Caco-2 (cell line): ENCODE measurements at regions of chr4 and their contacts with region 1.

Region 1: GRCh38 chr4:108620101-108620932 is at the start of gene RPL34:
- DNase-seq: peak; percentile 92 to 95
- H3K4me3 ChIP-seq: peak within 1 kb of the TSS; percentile 82
- H3K4me3 Mint-ChIP-seq: peak within 1 kb of the TSS; percentile 96
- H3K27ac Mint-ChIP-seq: peak within 1 kb of the TSS; percentile 99
- H3K4me1 ChIP-seq: peaks cover 13% of the 10 kb centered on the region
- H3K4me1 Mint-ChIP-seq: peaks cover 15% of the 10 kb centered on the region
- H3K27me3 ChIP-seq: no peaks in the 10 kb centered on the region
- H3K27me3 Mint-ChIP-seq: no peaks in the 10 kb centered on the region
- CTCF ChIP-seq: no peak
- total RNA-seq, gene RPL34: 1,075 and 1,106 TPM in 2 replicates

Region 2: DNA sequence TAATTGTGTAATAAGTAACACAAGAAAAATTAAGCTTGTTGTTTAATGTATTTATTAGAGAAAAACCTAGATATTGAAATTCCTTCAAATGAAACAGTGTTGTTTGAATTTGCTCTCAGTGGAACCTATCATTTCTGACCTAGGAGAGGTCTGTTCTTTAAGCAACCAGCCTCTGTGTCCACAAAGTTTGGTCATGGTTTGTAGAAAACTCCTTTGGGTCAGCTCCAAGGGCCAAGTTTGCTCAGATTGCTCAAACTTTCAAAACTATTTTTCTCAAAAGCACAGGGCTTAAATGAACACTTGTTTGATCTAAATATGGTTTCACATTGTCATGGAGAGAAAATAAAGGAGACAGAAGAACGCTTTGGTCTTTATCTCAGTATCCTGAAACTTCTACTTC is 29.5 kb before region 1 on chr4:
- CTCF ChIA-PET with region 1: no interaction called
- POLR2A ChIA-PET with region 1: no interaction called
- intact Hi-C with region 1: loop called (anchors 1 kb)
- DNase-seq: no peak
- H3K4me3 ChIP-seq: no peak overlapping the region
- H3K4me3 Mint-ChIP-seq: no peak overlapping the region
- H3K27ac Mint-ChIP-seq: no peak overlapping the region
- H3K4me1 ChIP-seq: peaks cover 17% of the 10 kb centered on the region
- H3K4me1 Mint-ChIP-seq: peaks cover 19% of the 10 kb centered on the region
- H3K27me3 ChIP-seq: no peaks in the 10 kb centered on the region
- H3K27me3 Mint-ChIP-seq: no peaks in the 10 kb centered on the region
- CTCF ChIP-seq: no peak

Region 3: DNA sequence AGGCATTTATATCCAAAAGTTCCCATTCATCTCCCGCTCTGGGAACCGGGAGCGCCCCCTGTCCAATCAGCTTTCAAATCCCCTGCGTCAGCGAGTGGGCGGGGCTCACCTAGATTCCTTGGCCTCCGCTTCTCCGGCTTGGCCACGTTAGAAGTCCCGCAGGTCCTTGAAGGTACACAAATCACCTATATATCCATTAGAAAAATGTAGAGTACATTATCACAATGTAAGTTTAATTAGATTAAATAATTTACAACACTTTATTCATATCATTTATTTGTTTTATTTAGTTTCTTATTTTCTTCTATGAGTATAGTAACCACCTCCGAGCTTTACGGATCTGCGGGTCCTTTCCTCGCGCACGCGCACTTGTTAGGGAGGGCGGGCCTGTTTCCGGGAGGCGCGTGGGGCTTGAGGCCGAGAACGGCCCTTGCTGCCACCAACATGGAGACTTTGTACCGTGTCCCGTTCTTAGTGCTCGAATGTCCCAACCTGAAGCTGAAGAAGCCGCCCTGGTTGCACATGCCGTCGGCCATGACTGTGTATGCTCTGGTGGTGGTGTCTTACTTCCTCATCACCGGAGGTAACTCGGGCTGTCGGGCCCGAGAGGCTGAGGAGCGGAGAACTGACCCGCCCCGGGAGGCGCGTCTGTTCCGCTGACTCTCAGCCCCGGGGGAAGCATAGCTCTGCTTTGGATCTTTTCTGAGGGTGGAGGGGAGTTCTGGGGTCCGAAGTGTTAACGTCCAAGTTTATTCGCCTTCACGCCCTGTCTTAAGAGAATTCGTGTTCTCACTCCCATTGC is 30.1 kb after region 1 on chr4 and contains the start of gene OSTC:
- CTCF ChIA-PET with region 1: no interaction called
- POLR2A ChIA-PET with region 1: interaction called, 3 read pairs
- intact Hi-C with region 1: loop called (anchors 2 kb)
- DNase-seq: peak; percentile 93 to 94
- H3K4me3 ChIP-seq: peak within 1 kb of the TSS; percentile 59
- H3K4me3 Mint-ChIP-seq: peak within 1 kb of the TSS; percentile 97
- H3K27ac Mint-ChIP-seq: peak within 1 kb of the TSS; percentile 96
- H3K4me1 ChIP-seq: peaks cover 8% of the 10 kb centered on the region; the same call in 1 of the 2 replicates
- H3K4me1 Mint-ChIP-seq: no peaks in the 10 kb centered on the region
- H3K27me3 ChIP-seq: no peaks in the 10 kb centered on the region
- H3K27me3 Mint-ChIP-seq: no peaks in the 10 kb centered on the region
- CTCF ChIP-seq: peak in 1 of 2 experiments; percentile 15
- total RNA-seq, gene OSTC: 121 and 126 TPM in 2 replicates